ENCODE measurements at regions of chr9 and their contacts with region 1.

Region 1: GRCh38 chr9:137034863-137035761 is 3.2 kb upstream of the FUT7 start:
- DNase-seq: peak; percentile 75 to 87 (median 86)
- H3K4me3 ChIP-seq: no peak overlapping the region
- H3K27ac ChIP-seq: no peak overlapping the region
- H3K4me1 ChIP-seq: peaks cover 1% of the 10 kb centered on the region
- H3K27me3 ChIP-seq: no peaks in the 10 kb centered on the region
- CTCF ChIP-seq: peak; percentile 90 to 91 (median 90)
- EP300 ChIP-seq: no peak
- POLR2A ChIP-seq: peak; percentile 16

Region 2: DNA sequence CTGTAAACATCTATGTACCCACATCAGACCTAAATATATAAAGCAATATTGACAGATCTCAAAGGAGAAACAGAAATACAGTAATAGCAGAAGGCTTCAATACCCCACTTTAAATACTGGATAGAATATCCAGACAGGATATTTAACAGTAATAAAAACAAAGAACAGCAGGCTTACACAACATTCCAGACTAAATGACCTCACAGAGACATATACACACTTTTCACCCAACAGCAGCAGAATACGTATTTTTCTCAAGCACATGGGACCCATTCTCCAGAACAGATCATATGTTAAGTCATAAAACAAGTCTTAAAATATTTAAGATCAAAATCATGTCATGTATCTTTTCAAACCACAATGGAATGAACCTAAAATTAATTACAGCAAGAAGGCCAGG is 1204.6 kb before region 1 on chr9:
- intact Hi-C with region 1: no loop called
- DNase-seq: no peak
- H3K4me3 ChIP-seq: no peak overlapping the region
- H3K27ac ChIP-seq: no peak overlapping the region
- H3K4me1 ChIP-seq: no peaks in the 10 kb centered on the region
- H3K27me3 ChIP-seq: no peaks in the 10 kb centered on the region
- CTCF ChIP-seq: no peak
- EP300 ChIP-seq: no peak
- POLR2A ChIP-seq: no peak

Region 3: DNA sequence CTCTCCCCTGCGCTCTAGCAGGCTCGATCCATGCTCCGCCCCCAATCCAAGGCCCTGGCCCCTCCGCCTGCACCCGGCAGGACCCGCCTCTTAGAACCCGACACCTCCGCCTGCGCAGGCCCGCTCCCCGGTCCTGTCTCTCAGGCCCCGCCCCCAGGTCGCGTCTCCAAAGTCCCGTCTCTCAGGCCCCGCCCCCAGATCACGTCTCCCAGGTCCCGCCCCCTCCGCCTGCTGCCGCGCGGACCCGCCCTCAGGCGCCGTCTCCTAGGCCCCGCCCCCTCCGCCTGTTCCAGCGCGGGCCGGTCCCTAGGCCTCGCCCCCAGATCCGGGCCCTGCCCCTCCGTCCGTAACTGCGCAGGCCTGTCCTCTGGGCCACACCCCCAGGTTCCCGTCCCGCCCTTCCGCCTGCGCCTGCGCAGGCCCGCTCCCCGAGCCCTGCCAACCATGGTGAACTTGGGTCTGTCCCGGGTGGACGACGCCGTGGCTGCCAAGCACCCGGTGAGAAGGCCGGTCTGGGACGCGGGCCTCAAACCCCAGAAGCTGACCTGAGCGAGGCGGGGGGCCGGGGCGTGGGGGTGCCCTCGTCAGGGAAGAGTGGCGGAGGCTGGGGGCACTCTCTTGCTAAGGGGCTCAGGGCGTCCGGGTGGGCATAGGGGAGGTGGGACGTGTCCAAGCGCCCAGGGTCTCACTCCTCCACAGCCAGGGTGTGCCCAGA is 244.0 kb before region 1 on chr9 and contains the start of gene TMEM141:
- intact Hi-C with region 1: loop called (anchors 2 to 5 kb)
- DNase-seq: peak; percentile 100
- H3K4me3 ChIP-seq: peak within 1 kb of the TSS; percentile 77
- H3K27ac ChIP-seq: peak within 1 kb of the TSS; percentile 78 to 82
- H3K4me1 ChIP-seq: peaks cover 10% of the 10 kb centered on the region
- H3K27me3 ChIP-seq: no peaks in the 10 kb centered on the region
- CTCF ChIP-seq: no peak
- EP300 ChIP-seq: no peak
- POLR2A ChIP-seq: peak; percentile 36
- total RNA-seq, gene TMEM141: 43.1 to 115 (median 64.8) TPM

Region 4: GRCh38 chr9:136849038-136849959 is 185.8 kb before region 1 on chr9 and contains the start of gene PHPT1:
- intact Hi-C with region 1: loop called in 1 of 4 experiments (anchors 5 kb)
- DNase-seq: peak; percentile 98 to 99 (median 99)
- H3K4me3 ChIP-seq: peak within 1 kb of the TSS; percentile 51
- H3K27ac ChIP-seq: peak within 1 kb of the TSS; percentile 33 to 86
- H3K4me1 ChIP-seq: peaks cover 13% of the 10 kb centered on the region
- H3K27me3 ChIP-seq: peaks cover 14% of the 10 kb centered on the region
- CTCF ChIP-seq: no peak
- EP300 ChIP-seq: no peak
- POLR2A ChIP-seq: peak; percentile 74
- total RNA-seq, gene PHPT1: 39.2 to 132 (median 86.9) TPM

Region 5: GRCh38 chr9:136949817-136950655 is 85.1 kb before region 1 on chr9:
- intact Hi-C with region 1: loop called in 2 of 4 experiments (anchors 2 to 5 kb)
- DNase-seq: peak; percentile 91 to 96 (median 94)
- H3K4me3 ChIP-seq: peak overlapping the region; percentile 44
- H3K27ac ChIP-seq: peak overlapping the region; percentile 4 to 62
- H3K4me1 ChIP-seq: peaks cover 7% of the 10 kb centered on the region
- H3K27me3 ChIP-seq: no peaks in the 10 kb centered on the region
- CTCF ChIP-seq: peak in 1 of 3 donors; percentile 30
- EP300 ChIP-seq: no peak
- POLR2A ChIP-seq: peak; percentile 22

Region 6: GRCh38 chr9:137070201-137070905 is 35.2 kb after region 1 on chr9 and contains the start of gene SAPCD2:
- intact Hi-C with region 1: no loop called
- DNase-seq: peak in 4 of 5 donors; percentile 55 to 76 (median 62)
- H3K4me3 ChIP-seq: peak within 1 kb of the TSS; percentile 8
- H3K27ac ChIP-seq: no peak within 1 kb of the TSS
- H3K4me1 ChIP-seq: no peaks in the 10 kb centered on the region
- H3K27me3 ChIP-seq: peaks cover 4% of the 10 kb centered on the region
- CTCF ChIP-seq: no peak
- EP300 ChIP-seq: no peak
- POLR2A ChIP-seq: no peak
- total RNA-seq, gene SAPCD2: 0.24 to 0.62 (median 0.37) TPM in 5 of 7 donors, not detected in the others